ENCODE measurements at regions of chr3 and their contacts with region 1.

Region 1: DNA sequence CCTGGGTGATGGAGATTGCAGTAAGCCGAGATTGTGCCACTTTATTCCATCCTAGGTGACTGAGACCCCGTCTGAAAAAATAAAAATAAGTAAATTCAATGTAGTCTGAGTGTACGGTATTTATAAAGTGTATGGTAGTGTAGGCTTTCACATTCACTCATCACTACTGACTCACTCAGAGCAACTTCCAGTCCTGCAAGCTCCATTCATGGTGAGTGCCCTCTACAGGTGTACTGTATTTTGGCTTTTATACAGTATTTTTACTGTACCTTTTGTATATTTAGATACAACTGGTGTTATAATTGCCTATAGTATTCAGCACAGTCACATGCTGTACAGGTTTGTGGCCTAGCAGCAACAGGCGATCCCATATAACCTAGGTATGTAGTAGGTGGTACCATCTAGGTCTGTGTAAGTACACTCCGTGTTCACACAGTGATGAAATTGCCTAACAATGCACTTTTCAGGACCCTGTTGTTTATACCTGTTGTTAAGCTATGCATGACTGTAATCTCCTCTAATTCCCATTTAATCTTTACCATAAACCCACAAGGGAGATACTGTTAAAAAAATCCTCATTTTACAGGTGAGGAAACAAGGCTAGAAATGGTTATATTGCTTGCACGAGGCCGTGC is 19.3 kb downstream of the CACNA1D start:
- DNase-seq: peak; percentile 25
- ATAC-seq: peak; percentile 73
- H3K4me3 ChIP-seq: no peak overlapping the region
- H3K27ac ChIP-seq: no peak overlapping the region
- H3K4me1 ChIP-seq: no peaks in the 10 kb centered on the region
- H3K27me3 ChIP-seq: no peaks in the 10 kb centered on the region; a peak in 1 of 5 replicates
- CTCF ChIP-seq: no peak
- EP300 ChIP-seq: no peak
- POLR2A ChIP-seq: no peak
- RAD21 ChIP-seq: no peak; the same call in 1 of the 2 replicates

Region 2: GRCh38 chr3:53375019-53375418 is 138.7 kb before region 1 on chr3:
- CTCF ChIA-PET with region 1: interaction called, 4 read pairs
- POLR2A ChIA-PET with region 1: no interaction called
- in situ Hi-C with region 1: no loop called
- intact Hi-C with region 1: loop called (anchors 5 kb)
- DNase-seq: peak; percentile 69
- ATAC-seq: peak; percentile 99
- H3K4me3 ChIP-seq: no peak overlapping the region
- H3K27ac ChIP-seq: no peak overlapping the region
- H3K4me1 ChIP-seq: no peaks in the 10 kb centered on the region
- H3K27me3 ChIP-seq: no peaks in the 10 kb centered on the region
- CTCF ChIP-seq: peak; percentile 94
- EP300 ChIP-seq: no peak
- POLR2A ChIP-seq: no peak
- RAD21 ChIP-seq: peak; percentile 93

Measured in HepG2 (cell line).